ENCODE measurements at regions of chr22 and their contacts with region 1.

Region 1: GRCh38 chr22:45831394-45831793 is 145.6 kb downstream of the WNT7B start:
- ATAC-seq: no peak
- H3K4me3 ChIP-seq: no peak overlapping the region
- H3K27ac ChIP-seq: no peak overlapping the region
- H3K4me1 ChIP-seq: no peaks in the 10 kb centered on the region

Region 2: DNA sequence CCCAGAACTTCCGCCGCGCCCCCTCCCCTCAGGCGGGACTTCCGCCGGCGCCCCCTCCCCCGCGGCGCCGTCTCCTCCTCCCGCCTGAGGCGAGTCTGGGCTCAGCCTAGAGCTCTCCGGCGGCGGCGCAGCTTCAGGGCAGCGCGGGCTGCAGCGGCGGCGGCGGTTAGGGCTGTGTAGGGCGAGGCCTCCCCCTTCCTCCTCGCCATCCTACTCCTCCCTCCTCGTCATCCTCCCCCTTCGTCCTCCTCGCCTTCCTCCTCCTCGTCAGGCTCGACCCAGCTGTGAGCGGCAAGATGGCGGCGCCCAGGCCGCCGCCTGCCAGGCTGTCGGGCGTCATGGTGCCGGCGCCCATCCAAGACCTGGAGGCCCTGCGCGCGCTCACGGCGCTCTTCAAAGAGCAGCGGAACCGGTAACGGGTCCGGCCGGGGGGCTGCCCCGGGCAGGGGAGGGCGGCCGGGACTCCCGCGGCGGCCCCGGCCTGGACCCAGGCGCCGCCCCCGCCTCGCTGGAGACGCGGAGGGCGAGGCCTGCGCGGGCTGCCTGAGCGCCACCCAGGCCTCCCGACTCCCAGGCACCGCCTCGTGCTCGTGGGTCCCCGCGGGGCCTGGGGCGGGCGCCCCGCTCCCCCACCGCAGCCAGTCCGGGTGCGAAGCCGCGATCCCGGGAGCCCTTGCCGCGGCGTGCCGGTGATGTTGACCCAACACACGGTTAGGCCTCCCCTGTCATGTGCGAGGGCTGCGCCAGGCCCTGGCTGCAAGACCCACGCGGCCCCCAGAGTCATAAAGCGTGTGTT is 159.4 kb before region 1 on chr22 and contains the start of gene ATXN10:
- in situ Hi-C with region 1: loop called in 1 of 9 experiments (anchors 25 kb)
- ATAC-seq: peak; percentile 81 to 93 (median 89)
- H3K4me3 ChIP-seq: peak within 1 kb of the TSS; percentile 77 to 90 (median 87)
- H3K27ac ChIP-seq: peak within 1 kb of the TSS; percentile 87 to 88
- H3K4me1 ChIP-seq: peaks cover 14 to 17% of the 10 kb centered on the region in 2 donors
- total RNA-seq, gene ATXN10: 61.1 to 122 (median 89.1) TPM

Region 3: GRCh38 chr22:45948081-45948648 is 116.8 kb after region 1 on chr22:
- in situ Hi-C with region 1: no loop called
- ATAC-seq: peak in 1 of 8 experiments; percentile 43
- H3K4me3 ChIP-seq: no peak overlapping the region
- H3K27ac ChIP-seq: no peak overlapping the region
- H3K4me1 ChIP-seq: peaks cover 0 to 7% of the 10 kb centered on the region in 2 donors

Measured in motor neuron (in vitro differentiated cells).